ENCODE measurements at regions of chr10 and their contacts with region 1.

Region 1: GRCh38 chr10:96743988-96744585 is 23.8 kb upstream of the PIK3AP1 start:
- DNase-seq: no peak
- H3K4me3 ChIP-seq: no peak overlapping the region
- H3K27ac ChIP-seq: no peak overlapping the region
- H3K27me3 ChIP-seq: peaks cover 0 to 5% (median 0%) of the 10 kb centered on the region in 45 donors
- CTCF ChIP-seq: peak in 41 of 56 donors; percentile 14 to 56 (median 32)

Region 2: GRCh38 chr10:96642973-96643372 is 101.1 kb before region 1 on chr10:
- intact Hi-C with region 1: loop called in 1 of 2 experiments (anchors 10 kb)
- DNase-seq: peak; percentile 37 to 79 (median 62)
- H3K4me3 ChIP-seq: no peak overlapping the region
- H3K27ac ChIP-seq: no peak overlapping the region
- H3K27me3 ChIP-seq: no peaks in the 10 kb centered on the region
- CTCF ChIP-seq: peak; percentile 15 to 65 (median 52)

Measured in dorsolateral prefrontal cortex (tissue), 120 donors.